ENCODE measurements at regions of chr17 and their contacts with region 1.

Region 1: GRCh38 chr17:80832888-80833583 is 158.6 kb upstream of the CHMP6 start:
- DNase-seq: peak; percentile 84
- H3K4me3 Mint-ChIP-seq: peak overlapping the region; percentile 76
- H3K27ac Mint-ChIP-seq: peak overlapping the region; percentile 91
- H3K4me1 Mint-ChIP-seq: peaks cover 60% of the 10 kb centered on the region
- H3K27me3 Mint-ChIP-seq: no peaks in the 10 kb centered on the region

Region 2: GRCh38 chr17:80605326-80606066 is 227.5 kb before region 1 on chr17:
- intact Hi-C with region 1: loop called (anchors 1 kb)
- DNase-seq: peak; percentile 31
- H3K4me3 Mint-ChIP-seq: no peak overlapping the region
- H3K27ac Mint-ChIP-seq: peak overlapping the region; percentile 35
- H3K4me1 Mint-ChIP-seq: peaks cover 66% of the 10 kb centered on the region
- H3K27me3 Mint-ChIP-seq: peaks cover 2% of the 10 kb centered on the region

Region 3: DNA sequence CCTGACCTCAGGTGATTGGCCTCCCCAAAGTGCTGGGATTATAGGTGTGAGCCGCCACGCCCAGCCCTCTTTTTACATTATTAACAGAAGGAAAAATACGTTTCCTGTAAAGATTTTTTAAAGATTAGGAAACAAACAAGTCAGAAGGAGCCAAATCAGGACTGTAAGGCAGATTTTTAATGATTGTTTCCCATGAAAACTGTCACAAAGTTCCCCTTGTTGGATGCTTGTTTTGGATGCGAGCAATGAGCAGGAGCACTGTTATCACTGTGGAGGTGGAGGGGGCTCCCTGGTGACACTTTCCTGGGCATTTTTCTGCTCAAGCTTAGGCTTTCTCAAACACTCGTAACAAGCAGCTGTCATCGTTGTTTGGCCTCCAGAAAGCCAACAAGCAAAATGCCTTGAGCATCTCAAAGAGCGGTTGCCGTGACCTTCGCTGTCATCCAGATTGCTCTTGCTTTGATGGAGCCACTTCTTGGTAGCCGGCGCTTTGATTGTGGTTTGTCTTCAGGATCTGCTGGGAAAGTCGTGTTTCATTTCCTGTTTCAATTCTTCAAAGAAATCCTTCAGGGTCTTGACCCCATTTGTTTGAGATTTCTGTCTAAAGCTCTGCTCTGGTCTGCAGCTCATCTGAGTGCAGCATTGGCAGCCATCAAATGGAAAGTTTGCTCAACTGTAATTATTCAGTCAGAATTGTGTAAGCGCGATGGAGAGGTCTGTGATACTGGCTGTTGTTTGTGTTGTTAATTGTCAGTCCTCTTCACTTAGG is 159.7 kb before region 1 on chr17:
- intact Hi-C with region 1: loop called (anchors 5 kb)
- DNase-seq: no peak
- H3K4me3 Mint-ChIP-seq: peak overlapping the region; percentile 74
- H3K27ac Mint-ChIP-seq: peak overlapping the region; percentile 72
- H3K4me1 Mint-ChIP-seq: peaks cover 89% of the 10 kb centered on the region
- H3K27me3 Mint-ChIP-seq: no peaks in the 10 kb centered on the region

Region 4: GRCh38 chr17:80855948-80856862 is 23.2 kb after region 1 on chr17:
- intact Hi-C with region 1: loop called (anchors 1 kb)
- DNase-seq: peak; percentile 85
- H3K4me3 Mint-ChIP-seq: peak overlapping the region; percentile 61
- H3K27ac Mint-ChIP-seq: peak overlapping the region; percentile 96
- H3K4me1 Mint-ChIP-seq: peaks cover 80% of the 10 kb centered on the region
- H3K27me3 Mint-ChIP-seq: no peaks in the 10 kb centered on the region

Region 5: DNA sequence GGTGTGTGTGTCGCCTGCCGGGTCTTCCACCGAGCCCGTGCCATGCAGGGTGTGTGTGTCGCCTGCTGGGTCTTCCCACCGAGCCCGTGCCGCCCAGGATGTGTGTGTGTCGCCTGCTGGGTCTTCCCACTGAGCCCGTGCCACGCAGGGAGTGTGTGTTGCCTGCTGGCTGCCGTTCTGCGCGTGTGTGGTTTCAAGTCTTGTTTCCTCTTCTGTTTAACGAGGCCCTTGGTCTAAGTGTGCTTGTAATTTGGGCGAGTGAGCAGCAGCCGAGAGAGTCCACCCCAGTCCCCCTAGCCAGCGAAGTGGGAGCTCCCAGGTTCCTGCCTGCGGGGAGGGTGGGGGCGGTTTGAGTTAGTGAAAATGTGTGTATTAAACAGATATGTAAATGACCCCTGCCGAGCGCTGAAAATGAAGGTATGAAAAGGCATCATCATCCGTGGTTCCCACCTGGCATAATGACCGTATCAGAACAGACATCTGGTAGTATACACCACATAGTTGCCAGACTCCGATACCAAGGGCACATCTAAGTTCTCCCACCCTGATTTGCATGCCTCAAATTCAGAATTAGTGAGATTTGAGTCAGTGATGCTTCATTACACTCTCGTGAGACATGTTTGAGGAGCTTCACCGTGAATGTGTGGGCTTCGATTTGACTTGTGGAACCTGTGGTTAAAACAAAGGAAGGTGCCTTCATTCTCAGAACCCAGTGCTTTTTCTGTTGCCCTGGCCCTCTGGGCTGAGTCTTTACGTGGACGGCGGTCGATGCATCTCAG is 44.1 kb after region 1 on chr17:
- intact Hi-C with region 1: loop called (anchors 1 kb)
- DNase-seq: peak; percentile 64
- H3K4me3 Mint-ChIP-seq: peak overlapping the region; percentile 65
- H3K27ac Mint-ChIP-seq: peak overlapping the region; percentile 96
- H3K4me1 Mint-ChIP-seq: peaks cover 55% of the 10 kb centered on the region
- H3K27me3 Mint-ChIP-seq: no peaks in the 10 kb centered on the region

Measured in activated T-helper 1 cell treated with anti-CD3 and anti-CD28 coated beads, Interleukin-12 subunit alpha, Interleukin-12 subunit beta, Interleukin-2, Interleukin-4 antibody, amounts not matched to agents 30 ng/mL and 10 ng/mL and 1 ng/mL, durations not matched to agents 14 hours and 24 hours and 36 hours (primary cell).